Mucosa of descending colon (tissue), 3 donors: ENCODE measurements at regions of chr1 and their contacts with region 1.

Region 1: DNA sequence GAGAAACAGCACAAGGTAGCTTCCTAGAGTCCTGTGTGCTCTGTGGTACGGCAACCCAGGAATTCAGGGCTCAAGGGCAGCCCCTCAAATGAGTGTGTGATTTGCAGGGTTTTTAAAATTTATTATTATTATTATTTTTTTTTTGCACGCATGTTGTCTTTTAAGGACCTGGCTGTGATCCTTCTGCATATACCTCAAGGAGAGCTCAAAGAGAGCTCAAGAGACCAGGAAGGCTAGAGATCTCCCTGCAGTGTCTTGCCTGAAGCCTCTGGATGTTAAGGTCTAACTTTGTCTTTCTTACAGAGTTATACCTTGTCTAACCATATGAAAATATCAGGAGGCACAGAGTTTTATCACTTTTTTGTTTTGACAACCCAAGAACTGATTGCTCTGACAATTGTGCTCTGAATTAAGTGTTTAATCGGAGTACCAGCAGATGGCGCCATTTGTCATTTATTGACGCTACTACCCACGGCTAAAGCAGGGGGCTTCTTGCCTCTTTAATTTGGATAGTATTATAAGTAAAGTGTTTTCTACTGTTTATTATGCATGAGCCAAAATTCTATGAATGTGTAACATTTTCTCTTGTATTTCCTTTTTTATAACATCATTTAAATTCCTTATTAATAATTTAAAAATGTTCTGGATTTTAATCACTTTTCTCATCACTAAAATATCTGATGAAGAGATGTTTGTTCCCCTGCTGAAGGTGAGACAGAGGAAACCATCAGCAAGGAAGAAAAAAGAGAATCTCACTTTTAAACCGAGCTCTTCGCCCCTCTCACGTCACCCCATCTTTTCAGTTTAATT is 35.8 kb upstream of the LMO4 start:
- DNase-seq: peak in 1 of 3 donors; percentile 86
- ATAC-seq: peak; percentile 31
- H3K4me3 ChIP-seq: no peak overlapping the region
- H3K4me1 ChIP-seq: no peaks in the 10 kb centered on the region
- CTCF ChIP-seq: peak; percentile 26

Region 2: DNA sequence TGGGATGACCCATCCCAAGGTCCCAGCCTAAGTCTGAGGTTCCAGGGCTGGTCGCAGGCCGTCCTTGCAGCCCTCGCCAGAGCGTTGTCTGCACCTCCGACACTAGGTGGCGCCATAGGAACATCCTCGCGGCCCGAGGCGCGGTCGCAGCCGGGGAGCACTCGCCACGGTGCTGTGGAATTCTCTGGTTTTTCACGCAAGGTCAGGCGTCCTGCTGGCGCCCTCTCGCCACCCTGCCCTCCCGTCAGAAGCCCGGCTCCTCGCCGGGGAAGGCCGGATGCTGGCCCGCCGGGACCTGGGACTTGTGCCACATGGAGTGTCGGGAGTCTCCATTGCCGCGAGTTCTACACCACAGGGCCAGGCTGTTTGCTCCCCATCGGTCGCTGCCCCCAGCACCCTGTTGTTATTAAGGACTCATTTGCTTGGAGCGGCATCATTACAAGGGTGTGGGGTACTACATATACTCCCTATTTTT is 161.0 kb before region 1 on chr1:
- intact Hi-C with region 1: loop called in 1 of 2 experiments (anchors 10 kb)
- DNase-seq: peak; percentile 78 to 82 (median 79)
- ATAC-seq: peak; percentile 95
- H3K4me3 ChIP-seq: no peak overlapping the region
- H3K4me1 ChIP-seq: no peaks in the 10 kb centered on the region
- CTCF ChIP-seq: peak; percentile 92

Region 3: DNA sequence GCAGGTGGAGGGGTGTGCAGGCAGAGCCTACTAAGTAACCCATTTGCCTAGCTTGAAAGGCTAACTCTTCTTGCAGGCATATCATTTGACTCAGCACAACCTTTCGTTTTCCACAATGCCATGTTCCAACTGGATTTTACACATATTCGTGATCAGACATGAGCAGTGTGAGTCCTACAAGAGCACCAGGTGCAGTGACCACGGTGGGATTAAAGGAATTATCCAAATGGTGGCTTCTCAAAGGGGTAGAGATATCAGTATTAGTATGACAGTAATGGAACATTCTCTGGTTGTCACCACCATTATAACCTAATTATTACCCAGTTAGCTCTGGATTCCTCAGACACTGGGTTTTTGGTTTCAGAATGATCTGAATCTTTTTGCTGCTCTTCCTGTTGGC is 359.3 kb after region 1 on chr1:
- intact Hi-C with region 1: no loop called
- DNase-seq: no peak
- ATAC-seq: no peak
- H3K4me3 ChIP-seq: no peak overlapping the region
- H3K4me1 ChIP-seq: no peaks in the 10 kb centered on the region
- CTCF ChIP-seq: no peak

Region 4: DNA sequence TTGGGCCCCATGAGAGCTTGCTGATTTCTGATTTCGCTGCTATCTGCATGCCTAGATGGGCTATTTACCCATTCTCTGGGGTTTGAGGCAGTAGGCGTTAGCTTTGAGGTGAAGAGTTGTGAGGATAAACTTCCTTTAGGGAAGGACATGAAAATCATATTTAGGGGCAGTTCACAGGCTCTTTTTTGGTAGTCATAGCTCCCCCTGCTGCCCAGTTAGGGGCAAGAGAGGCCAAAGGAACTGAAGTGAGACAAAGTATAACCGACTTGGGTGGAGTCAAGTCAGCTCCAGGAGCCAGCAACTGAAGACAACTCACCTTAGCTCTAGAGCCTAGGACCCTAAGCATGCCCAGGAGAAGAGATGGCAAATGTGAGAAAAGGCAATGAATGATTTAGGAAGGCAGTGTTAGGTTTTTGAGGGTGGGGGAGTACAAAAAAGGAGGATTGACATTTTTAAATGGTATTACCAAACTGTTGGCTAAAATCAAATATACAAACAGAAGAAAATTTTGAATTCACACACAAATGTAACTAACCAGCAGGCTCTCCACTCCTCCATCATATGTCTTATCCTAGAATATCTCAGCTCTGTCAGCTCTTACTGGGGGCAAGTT is 660.9 kb after region 1 on chr1:
- intact Hi-C with region 1: loop called in 1 of 2 experiments (anchors 10 kb)
- DNase-seq: peak in 2 of 3 donors; percentile 70 to 84
- ATAC-seq: peak; percentile 89
- H3K4me3 ChIP-seq: no peak overlapping the region
- H3K4me1 ChIP-seq: no peaks in the 10 kb centered on the region
- CTCF ChIP-seq: peak; percentile 50

Region 5: GRCh38 chr1:88052167-88052566 is 759.3 kb after region 1 on chr1:
- intact Hi-C with region 1: loop called in 1 of 2 experiments (anchors 10 kb)
- DNase-seq: no peak
- ATAC-seq: no peak
- H3K4me3 ChIP-seq: no peak overlapping the region
- H3K4me1 ChIP-seq: no peaks in the 10 kb centered on the region
- CTCF ChIP-seq: no peak

Region 6: DNA sequence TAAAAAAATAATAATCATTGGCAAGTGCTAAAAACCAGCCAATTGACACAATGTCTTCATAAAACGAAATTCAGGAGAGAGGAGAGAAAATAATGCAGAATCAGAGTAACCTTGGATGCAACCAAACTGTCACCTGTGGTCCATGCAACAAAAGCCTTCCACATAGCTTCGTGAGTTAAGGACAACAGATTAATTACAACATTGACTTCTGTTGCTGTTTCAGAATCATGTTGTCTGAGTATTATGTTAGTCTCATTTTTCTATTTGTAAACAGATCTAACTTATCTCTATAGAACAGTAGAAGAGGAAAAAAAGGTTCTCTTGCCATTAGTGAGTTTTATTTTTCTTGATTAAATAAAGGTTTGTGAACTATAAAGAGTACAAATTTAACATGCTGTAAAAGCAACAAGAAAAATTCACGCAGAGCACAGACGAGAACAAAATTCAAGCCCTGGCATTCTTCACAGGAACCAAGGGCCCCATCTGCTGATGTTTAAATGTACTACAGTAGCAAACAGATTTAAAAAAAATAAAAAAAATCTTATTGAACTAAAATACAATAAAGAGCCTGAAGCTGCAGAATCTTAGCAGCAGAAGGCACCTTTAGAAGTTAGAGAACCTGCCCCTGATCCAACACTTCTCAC is 1010.1 kb after region 1 on chr1:
- intact Hi-C with region 1: loop called in 1 of 2 experiments (anchors 10 kb)
- DNase-seq: peak in 1 of 3 donors; percentile 36
- ATAC-seq: peak; percentile 43
- H3K4me3 ChIP-seq: no peak overlapping the region
- H3K4me1 ChIP-seq: peaks cover 2% of the 10 kb centered on the region
- CTCF ChIP-seq: no peak